ENCODE measurements at regions of chr17 and their contacts with region 1.

Region 1: GRCh38 chr17:48259694-48260291 is 152.2 kb downstream of the SNX11 start:
- DNase-seq: no peak
- CTCF ChIP-seq: peak; percentile 45

Region 2: DNA sequence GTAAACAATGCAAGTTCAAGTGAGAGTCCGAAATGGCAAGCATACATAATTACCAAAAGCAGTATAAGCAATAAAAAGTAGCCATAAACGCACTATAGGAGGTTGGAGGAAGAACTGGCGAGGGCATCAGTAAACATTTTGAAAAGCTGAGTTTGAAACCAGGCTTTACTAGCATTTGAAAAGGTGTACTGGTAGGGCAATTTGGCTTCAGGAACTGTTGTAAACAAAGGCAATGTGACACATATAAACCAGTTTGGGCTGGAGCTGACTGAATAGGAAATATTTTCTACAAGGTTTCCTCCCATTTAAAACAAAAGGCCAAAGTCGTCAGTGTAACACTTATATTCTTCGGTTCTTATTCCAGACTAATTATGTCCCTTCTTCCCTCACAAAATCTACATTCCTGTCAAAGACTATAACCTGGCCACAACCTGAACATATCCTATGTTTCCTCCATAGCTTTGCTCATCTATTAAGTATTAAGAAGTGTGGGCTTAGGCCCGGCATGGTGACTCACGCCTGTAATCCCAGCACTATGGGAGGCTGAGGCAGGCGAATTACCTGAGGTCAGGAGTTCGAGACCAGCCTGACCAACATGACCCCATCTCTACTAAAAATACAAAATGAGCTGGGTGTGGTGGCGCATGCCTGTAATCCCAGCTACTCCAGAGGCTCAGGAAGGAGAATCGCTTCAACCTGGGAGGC is 166.3 kb before region 1 on chr17:
- CTCF ChIA-PET with region 1: no interaction called
- POLR2A ChIA-PET with region 1: no interaction called
- DNase-seq: no peak
- CTCF ChIP-seq: no peak

Region 3: GRCh38 chr17:48244121-48244711 is 15.6 kb before region 1 on chr17:
- CTCF ChIA-PET with region 1: interaction called, 27 read pairs
- POLR2A ChIA-PET with region 1: no interaction called
- DNase-seq: no peak
- CTCF ChIP-seq: no peak

Region 4: GRCh38 chr17:48270896-48271295 is 11.1 kb after region 1 on chr17:
- CTCF ChIA-PET with region 1: interaction called, 16 read pairs
- POLR2A ChIA-PET with region 1: no interaction called
- DNase-seq: no peak
- CTCF ChIP-seq: no peak

Region 5: DNA sequence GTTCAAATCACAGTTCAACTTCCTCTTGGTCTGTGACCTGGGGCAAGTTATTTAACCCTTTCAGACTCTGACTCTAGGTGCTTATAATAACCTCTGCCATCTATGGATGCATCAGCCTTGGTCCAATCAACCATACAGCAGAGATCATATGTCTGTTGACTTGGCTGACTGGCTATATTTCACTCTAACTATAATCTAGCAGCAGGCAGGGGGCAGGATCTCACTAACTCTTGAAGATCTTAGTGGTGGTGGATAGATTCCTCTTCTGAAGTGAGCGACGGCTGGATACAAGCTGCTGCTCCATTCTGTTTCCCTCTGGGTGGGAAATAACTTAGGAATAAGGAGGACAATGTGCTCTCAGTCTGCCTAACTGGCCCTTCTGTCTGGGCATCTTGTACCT is 23.6 kb after region 1 on chr17:
- CTCF ChIA-PET with region 1: interaction called, 10 read pairs
- POLR2A ChIA-PET with region 1: no interaction called
- DNase-seq: no peak
- CTCF ChIP-seq: no peak

Region 6: GRCh38 chr17:48295362-48296288 is 35.8 kb after region 1 on chr17:
- CTCF ChIA-PET with region 1: interaction called, 12 read pairs
- POLR2A ChIA-PET with region 1: no interaction called
- DNase-seq: peak; percentile 35
- CTCF ChIP-seq: no peak

Region 7: DNA sequence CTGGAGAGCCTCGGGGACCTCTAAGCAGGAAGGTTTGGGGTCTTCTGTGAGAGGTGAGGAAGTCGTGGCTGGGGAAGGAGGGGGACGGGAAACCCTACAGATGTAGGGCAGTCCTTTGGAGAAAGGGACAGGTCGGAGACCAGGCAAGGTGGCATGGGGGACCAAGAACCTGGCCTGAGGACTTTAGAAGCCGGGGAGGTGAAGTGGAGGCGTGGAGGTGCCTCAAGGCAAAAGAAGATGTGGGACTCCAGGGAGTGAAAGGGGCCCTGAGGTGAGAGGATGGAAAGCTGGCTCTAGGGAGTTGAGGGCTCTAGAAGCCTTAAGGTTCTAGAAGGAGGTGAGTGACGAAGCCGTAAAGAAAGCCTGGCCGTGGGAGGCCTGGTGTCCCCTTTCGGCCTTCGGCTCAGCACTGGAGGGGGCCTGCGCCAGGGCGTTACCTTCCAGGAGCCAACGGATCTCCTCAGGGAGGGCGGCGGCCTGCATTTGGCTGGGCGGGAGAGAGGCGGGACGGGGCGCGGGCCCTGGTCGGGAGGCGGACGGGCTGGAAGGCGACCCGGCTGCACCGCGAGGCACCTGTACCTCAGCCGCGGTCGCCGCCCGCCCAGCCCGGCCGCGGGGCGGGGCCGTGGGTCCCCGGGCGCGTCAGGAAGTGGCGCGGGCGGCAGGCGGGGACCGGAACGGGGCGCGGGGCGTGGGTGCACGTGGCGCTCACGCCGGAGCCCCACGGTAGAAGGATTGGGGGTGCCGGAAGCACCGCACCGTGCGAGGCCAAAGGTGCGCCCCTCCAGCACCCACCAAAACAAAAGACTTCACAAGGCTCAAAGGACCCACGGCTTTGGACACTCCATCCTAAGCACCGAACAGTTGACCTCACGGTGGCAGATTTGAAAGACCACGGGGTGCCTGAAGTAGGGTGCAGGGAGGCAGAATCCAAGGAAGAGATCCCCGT is 170.1 kb after region 1 on chr17 and contains the start of gene SKAP1:
- CTCF ChIA-PET with region 1: no interaction called
- POLR2A ChIA-PET with region 1: no interaction called
- DNase-seq: peak; percentile 78
- CTCF ChIP-seq: no peak

Region 8: GRCh38 chr17:48576479-48577309 is 316.9 kb after region 1 on chr17:
- CTCF ChIA-PET with region 1: no interaction called
- POLR2A ChIA-PET with region 1: no interaction called
- DNase-seq: no peak
- CTCF ChIP-seq: no peak

Measured in GM10248 (cell line).